ENCODE measurements at regions of chr1 and their contacts with region 1.

Region 1: DNA sequence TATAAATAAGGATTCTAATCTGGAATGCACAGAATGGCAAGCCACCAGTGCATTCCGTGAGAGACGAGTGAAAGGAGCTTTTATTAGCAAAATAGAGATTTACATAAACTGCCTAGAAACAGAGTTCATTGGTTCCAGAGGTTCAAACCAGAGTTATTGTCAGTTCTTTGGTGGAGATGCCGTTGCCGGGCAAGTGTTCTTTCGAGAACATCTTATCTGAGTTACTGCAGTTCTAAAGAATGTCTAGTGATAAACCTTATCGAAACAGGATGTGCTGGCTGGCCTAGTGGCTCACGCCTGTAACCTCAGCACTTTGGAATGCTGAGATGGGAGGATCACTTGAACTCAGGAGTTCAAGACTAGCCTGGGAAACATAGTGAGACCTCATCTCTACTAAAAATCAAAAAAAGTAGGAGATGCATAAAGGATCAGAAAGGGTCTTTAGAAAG is 19.8 kb upstream of the EVI5 start:
- DNase-seq: peak; percentile 71 to 85 (median 73)
- ATAC-seq: peak; percentile 86 to 98 (median 96)
- H3K4me3 ChIP-seq: no peak overlapping the region
- H3K27ac ChIP-seq: peak overlapping the region; percentile 20 to 79 (median 52)
- H3K4me1 ChIP-seq: peaks cover 0 to 17% (median 5%) of the 10 kb centered on the region in 12 donors
- H3K27me3 ChIP-seq: no peaks in the 10 kb centered on the region
- CTCF ChIP-seq: no peak
- POLR2A ChIP-seq: no peak

Region 2: GRCh38 chr1:92754000-92754718 is 50.6 kb before region 1 on chr1:
- intact Hi-C with region 1: loop called in 1 of 10 experiments (anchors 10 kb)
- DNase-seq: no peak
- ATAC-seq: no peak
- H3K4me3 ChIP-seq: no peak overlapping the region
- H3K27ac ChIP-seq: peak overlapping the region in 2 of 12 donors; percentile 18 to 80
- H3K4me1 ChIP-seq: peaks cover 0 to 32% (median 16%) of the 10 kb centered on the region in 12 donors
- H3K27me3 ChIP-seq: no peaks in the 10 kb centered on the region
- CTCF ChIP-seq: no peak
- POLR2A ChIP-seq: no peak

Measured in heart left ventricle (tissue), 16 donors.